ENCODE measurements at regions of chr4 and their contacts with region 1.

Region 1: DNA sequence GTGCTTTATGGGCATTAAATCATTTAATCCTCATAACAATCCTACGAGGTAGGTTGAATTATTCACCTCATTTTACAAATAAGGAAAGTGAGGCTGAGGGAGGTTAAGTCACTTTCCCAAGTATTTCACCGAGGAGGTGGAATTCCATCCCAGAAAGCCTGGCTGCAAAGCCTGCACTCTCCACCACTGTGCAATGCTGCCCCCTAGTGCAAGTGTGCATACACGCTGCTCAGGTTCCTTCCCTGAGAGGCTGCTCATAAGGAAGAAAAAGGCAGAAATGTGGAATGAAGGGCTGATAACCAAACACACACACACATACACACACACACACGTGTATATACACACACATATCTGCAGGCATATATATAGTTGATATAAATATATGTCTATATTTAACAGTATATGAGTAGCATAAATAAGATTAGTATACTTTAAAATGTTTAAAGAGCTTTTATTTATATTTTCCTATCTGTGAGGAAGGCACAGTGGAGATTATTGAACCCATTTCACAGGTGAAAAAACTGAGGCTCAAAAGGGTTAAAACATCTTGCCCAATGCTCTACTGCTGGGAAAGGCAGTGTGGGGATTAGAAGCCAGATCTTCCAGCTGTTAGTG is 714.5 kb upstream of the TENM3 start:
- DNase-seq: peak; percentile 42
- ATAC-seq: peak; percentile 51
- H3K4me3 Mint-ChIP-seq: no peak overlapping the region
- H3K27ac Mint-ChIP-seq: no peak overlapping the region
- H3K4me1 Mint-ChIP-seq: no peaks in the 10 kb centered on the region
- H3K27me3 Mint-ChIP-seq: no peaks in the 10 kb centered on the region

Region 2: GRCh38 chr4:181143250-181143854 is 385.3 kb before region 1 on chr4:
- CTCF ChIA-PET with region 1: interaction called, 16 read pairs
- POLR2A ChIA-PET with region 1: no interaction called
- DNase-seq: peak; percentile 79
- ATAC-seq: peak; percentile 70
- H3K4me3 Mint-ChIP-seq: no peak overlapping the region
- H3K27ac Mint-ChIP-seq: no peak overlapping the region
- H3K4me1 Mint-ChIP-seq: no peaks in the 10 kb centered on the region
- H3K27me3 Mint-ChIP-seq: no peaks in the 10 kb centered on the region

Region 3: GRCh38 chr4:181517491-181517890 is 11.2 kb before region 1 on chr4:
- CTCF ChIA-PET with region 1: interaction called, 11 read pairs
- POLR2A ChIA-PET with region 1: no interaction called
- DNase-seq: no peak
- ATAC-seq: no peak
- H3K4me3 Mint-ChIP-seq: no peak overlapping the region
- H3K27ac Mint-ChIP-seq: no peak overlapping the region
- H3K4me1 Mint-ChIP-seq: no peaks in the 10 kb centered on the region
- H3K27me3 Mint-ChIP-seq: no peaks in the 10 kb centered on the region

Region 4: DNA sequence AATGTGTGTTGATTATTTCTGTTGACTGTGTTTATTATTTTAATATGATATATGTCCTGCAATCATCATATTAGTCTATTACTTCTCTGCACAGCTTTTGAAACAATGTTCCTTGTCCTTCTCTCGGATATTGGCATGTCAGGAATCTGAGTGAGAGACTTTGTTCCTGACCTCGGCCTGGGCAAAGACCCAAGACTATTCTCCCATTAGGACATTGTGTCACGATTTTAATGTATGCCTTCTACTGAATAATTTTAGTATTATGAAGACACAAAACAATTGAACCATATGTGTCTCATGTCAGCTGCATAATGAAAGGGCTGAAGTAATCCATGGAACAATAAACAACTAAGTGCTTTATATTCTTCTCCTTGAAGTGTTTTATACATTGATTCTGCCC is 133.7 kb after region 1 on chr4:
- CTCF ChIA-PET with region 1: no interaction called
- POLR2A ChIA-PET with region 1: no interaction called
- DNase-seq: no peak
- ATAC-seq: no peak
- H3K4me3 Mint-ChIP-seq: no peak overlapping the region
- H3K27ac Mint-ChIP-seq: no peak overlapping the region
- H3K4me1 Mint-ChIP-seq: no peaks in the 10 kb centered on the region
- H3K27me3 Mint-ChIP-seq: no peaks in the 10 kb centered on the region

Measured in activated CD8-positive, alpha-beta T cell treated with anti-CD3 and anti-CD28 coated beads, Interleukin-2, amount 10 ng/mL, durations not matched to agents 7 days and 5 days (primary cell).